GM18951 (cell line): ENCODE measurements at regions of chr7 and their contacts with region 1.

Region 1: DNA sequence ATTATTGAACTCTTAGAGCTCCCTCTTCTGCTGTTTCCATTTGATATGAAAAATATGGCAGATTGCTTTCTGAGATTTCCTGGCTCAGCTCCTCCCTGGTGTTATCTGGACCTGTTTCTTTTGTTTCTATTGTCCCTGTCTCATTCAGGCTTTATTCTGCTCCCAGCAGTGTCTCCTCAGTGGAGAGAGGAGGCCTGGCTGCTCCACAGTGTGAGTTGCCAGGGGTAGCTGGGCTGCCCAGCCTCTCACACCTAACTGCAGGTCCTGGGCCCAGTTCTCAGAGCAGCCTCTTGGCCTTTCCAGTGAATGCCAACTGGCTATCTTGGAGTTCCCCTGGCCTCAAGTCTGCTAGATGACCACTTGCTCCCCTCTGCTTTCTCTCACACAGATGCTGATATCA is 127.0 kb downstream of the VPS41 start:
- POLR2A ChIP-seq: no peak

Region 2: GRCh38 chr7:39488467-39489393 is 706.7 kb after region 1 on chr7:
- in situ Hi-C with region 1: loop called (anchors 10 kb)
- POLR2A ChIP-seq: no peak